Posterior cingulate gyrus (tissue), 11 donors: ENCODE measurements at regions of chr12 and their contacts with region 1.

Region 1: DNA sequence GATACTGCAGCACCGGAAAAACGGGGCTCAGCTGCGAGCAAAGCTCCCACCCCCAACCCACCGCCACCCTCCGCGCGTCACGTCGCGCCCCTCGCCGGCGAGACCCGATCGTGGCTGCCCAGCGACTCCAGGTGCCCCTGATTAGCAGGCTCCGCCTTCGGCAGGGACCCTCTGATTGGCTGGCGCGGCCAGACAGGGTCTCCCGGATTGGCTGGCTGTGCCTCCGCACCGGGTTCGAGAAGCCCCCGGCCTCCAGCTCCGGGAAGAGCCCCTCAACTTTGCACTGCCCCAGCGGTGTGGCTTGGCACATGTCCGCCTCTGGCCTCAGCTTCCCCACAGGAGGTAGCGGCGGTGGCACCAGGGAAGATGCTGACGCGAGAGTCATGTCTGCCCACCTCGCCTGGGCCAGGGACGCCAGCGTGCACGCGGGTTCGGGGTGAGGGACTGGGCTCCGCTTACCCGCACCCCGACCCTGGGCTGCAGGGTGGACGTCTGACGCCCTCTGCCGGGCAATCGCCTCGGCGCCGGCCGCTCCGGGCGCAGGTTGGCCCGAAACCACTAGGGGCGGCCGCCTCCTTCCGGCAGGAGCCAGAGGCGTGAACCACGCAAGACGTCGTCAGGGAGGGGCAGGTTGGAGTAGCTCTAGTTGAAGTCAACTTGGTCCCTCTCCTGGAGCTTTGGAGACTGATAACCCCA is 498 bp upstream of the RHOF start:
- DNase-seq: peak; percentile 80 to 98 (median 86)

Region 2: DNA sequence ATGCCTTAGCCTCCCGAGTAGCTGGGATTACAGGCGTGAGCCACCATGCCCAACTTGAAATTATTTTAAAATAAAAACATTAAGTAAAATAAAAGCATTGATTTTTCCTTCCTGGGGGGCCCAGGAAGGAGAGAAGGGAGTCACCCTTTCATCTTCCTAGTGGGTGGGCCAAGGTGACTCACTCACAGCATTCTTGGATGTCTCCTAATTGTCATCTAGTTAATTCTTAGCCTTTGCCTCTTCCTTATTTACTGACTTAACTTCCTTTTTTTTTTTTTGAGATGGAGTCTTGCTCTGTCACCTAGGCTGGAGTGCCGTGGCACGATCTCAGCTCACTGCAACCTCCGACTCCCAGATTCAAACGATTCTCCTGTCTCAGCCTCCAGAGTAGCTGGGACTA is 52.2 kb before region 1 on chr12:
- intact Hi-C with region 1: no loop called
- DNase-seq: no peak

Region 3: GRCh38 chr12:121888478-121889266 is 94.7 kb after region 1 on chr12 and contains the start of gene PSMD9:
- intact Hi-C with region 1: loop called (anchors 2 kb)
- DNase-seq: peak; percentile 96 to 100 (median 98)